ENCODE measurements at regions of chr16 and their contacts with region 1.

Region 1: DNA sequence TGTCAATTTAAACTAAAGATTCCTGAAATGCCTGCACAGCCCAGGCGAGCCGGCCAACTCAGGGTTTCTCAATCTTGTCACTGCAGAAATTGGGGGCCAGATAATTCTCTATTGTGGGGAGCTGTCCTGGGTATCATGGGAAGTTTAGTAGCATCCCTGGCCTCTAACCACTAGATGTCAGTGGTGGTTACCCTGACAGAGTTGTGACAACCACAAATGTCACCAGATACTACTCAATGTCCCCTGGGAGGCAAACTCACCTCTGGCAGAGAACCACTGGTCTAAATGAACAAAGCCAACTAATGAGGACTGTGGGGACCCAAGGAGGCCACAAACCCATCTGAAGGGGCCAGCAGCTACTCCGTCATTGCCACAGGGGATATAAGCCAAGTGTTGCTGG is 90.9 kb downstream of the MYH11 start:
- DNase-seq: peak in 1 of 2 donors; percentile 64
- ATAC-seq: peak; percentile 72 to 87 (median 76)
- H3K4me3 ChIP-seq: no peak overlapping the region
- H3K4me3 Mint-ChIP-seq: no peak overlapping the region
- H3K27ac ChIP-seq: no peak overlapping the region
- H3K27ac Mint-ChIP-seq: no peak overlapping the region
- H3K4me1 ChIP-seq: no peaks in the 10 kb centered on the region
- H3K4me1 Mint-ChIP-seq: peaks cover 0 to 4% of the 10 kb centered on the region in 2 donors
- H3K27me3 ChIP-seq: no peaks in the 10 kb centered on the region
- H3K27me3 Mint-ChIP-seq: peaks cover 0 to 9% of the 10 kb centered on the region in 2 donors
- CTCF ChIP-seq: peak; percentile 32

Region 2: DNA sequence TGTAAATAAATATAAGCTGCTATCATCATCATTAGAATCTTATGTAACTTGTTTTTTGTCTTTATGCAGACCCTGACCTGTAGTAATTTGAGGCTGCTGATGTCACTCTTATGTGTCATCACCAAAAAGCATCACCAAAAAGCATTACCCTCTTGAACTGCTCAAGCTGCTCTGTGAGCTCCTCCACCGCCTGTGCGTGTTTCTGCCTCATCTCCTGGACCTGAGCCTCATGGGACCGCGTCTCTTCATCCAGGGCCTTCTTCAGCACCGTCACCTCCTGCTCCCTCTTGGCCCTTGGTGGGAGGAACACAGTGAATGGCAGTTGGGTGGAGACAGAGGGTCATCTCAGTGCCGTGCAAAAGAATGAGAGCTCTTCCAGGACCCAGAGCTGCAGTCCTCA is 33.5 kb before region 1 on chr16:
- intact Hi-C with region 1: no loop called
- DNase-seq: no peak
- ATAC-seq: no peak
- H3K4me3 ChIP-seq: no peak overlapping the region
- H3K4me3 Mint-ChIP-seq: no peak overlapping the region
- H3K27ac ChIP-seq: no peak overlapping the region
- H3K27ac Mint-ChIP-seq: peak overlapping the region in 1 of 2 donors; percentile 54
- H3K4me1 ChIP-seq: no peaks in the 10 kb centered on the region
- H3K4me1 Mint-ChIP-seq: no peaks in the 10 kb centered on the region
- H3K27me3 ChIP-seq: no peaks in the 10 kb centered on the region
- H3K27me3 Mint-ChIP-seq: no peaks in the 10 kb centered on the region
- CTCF ChIP-seq: no peak

Region 3: DNA sequence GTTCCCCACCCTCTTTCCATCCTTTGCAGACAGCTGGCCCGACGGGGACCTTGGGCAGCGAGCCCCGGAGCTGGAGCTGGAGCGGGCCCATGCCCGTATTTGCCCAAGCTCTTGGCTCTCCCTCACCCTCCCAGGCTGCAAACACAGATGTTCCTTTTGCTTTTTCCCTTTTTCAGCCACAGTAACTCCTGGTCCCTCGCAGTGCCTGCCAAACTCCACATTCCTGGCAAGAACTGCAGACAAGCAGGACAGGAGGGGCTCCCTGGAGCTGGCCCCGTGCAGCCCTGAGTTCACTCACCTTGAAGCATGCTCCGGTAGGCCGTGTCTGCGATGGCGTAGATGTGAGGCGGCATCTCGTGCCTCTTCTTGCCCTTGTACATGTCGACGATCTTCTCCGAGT is 57.1 kb after region 1 on chr16:
- intact Hi-C with region 1: loop called (anchors 5 kb)
- DNase-seq: no peak
- ATAC-seq: no peak
- H3K4me3 ChIP-seq: no peak overlapping the region
- H3K4me3 Mint-ChIP-seq: no peak overlapping the region
- H3K27ac ChIP-seq: no peak overlapping the region
- H3K27ac Mint-ChIP-seq: no peak overlapping the region
- H3K4me1 ChIP-seq: no peaks in the 10 kb centered on the region
- H3K4me1 Mint-ChIP-seq: no peaks in the 10 kb centered on the region
- H3K27me3 ChIP-seq: no peaks in the 10 kb centered on the region
- H3K27me3 Mint-ChIP-seq: peaks cover 0 to under 1% of the 10 kb centered on the region in 2 donors
- CTCF ChIP-seq: no peak